ENCODE measurements at regions of chr1 and their contacts with region 1.

Region 1: GRCh38 chr1:204989266-204990058 is 53.5 kb upstream of the CNTN2 start:
- DNase-seq: peak; percentile 65 to 71 (median 69)
- ATAC-seq: peak; percentile 82
- H3K4me3 ChIP-seq: no peak overlapping the region
- H3K27ac ChIP-seq: no peak overlapping the region
- H3K4me1 ChIP-seq: peaks cover 5% of the 10 kb centered on the region
- H3K27me3 ChIP-seq: no peaks in the 10 kb centered on the region
- CTCF ChIP-seq: peak; percentile 79 to 96 (median 88)
- POLR2A ChIP-seq: no peak

Region 2: DNA sequence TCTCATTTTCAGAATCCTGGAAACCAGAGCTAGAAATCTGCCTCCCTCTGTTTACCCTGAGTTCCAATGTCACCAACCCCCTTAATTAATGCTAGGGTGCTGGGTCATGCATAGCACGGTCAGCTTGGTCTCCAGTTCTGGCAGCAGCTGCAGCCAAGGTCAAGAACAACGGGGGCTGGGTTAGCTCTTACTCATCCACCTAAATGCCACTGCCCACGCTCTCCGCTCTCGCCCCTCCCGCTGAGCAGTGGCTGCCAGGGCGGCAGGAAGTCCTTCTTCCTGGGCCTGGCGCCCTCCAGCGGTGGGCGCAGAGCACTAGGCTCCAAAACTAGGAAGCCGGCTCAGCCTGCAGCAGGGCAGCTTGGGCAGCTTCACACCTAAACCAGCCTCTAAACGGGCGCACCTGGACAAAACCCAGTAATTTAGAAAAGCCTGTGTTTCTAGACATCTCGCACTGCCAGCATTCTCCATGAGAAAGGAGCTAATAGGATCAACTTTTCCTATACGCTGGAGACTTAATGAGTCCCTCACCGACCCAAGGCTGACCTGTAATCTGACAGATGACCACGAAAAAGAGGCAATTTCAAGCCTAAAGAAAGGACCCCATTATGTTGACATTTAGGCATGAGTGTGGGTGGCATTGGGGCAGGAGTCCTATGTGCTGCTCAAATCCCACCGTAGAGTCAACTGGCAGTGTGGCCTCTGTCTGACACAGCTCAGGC is 225.6 kb before region 1 on chr1:
- intact Hi-C with region 1: no loop called
- DNase-seq: peak; percentile 85 to 94 (median 92)
- ATAC-seq: peak; percentile 97
- H3K4me3 ChIP-seq: no peak overlapping the region
- H3K27ac ChIP-seq: peak overlapping the region in 3 of 4 donors; percentile 15 to 47 (median 40)
- H3K4me1 ChIP-seq: peaks cover 12% of the 10 kb centered on the region
- H3K27me3 ChIP-seq: peaks cover 0 to 1% of the 10 kb centered on the region in 2 donors
- CTCF ChIP-seq: peak; percentile 81 to 96 (median 84)
- POLR2A ChIP-seq: no peak

Region 3: DNA sequence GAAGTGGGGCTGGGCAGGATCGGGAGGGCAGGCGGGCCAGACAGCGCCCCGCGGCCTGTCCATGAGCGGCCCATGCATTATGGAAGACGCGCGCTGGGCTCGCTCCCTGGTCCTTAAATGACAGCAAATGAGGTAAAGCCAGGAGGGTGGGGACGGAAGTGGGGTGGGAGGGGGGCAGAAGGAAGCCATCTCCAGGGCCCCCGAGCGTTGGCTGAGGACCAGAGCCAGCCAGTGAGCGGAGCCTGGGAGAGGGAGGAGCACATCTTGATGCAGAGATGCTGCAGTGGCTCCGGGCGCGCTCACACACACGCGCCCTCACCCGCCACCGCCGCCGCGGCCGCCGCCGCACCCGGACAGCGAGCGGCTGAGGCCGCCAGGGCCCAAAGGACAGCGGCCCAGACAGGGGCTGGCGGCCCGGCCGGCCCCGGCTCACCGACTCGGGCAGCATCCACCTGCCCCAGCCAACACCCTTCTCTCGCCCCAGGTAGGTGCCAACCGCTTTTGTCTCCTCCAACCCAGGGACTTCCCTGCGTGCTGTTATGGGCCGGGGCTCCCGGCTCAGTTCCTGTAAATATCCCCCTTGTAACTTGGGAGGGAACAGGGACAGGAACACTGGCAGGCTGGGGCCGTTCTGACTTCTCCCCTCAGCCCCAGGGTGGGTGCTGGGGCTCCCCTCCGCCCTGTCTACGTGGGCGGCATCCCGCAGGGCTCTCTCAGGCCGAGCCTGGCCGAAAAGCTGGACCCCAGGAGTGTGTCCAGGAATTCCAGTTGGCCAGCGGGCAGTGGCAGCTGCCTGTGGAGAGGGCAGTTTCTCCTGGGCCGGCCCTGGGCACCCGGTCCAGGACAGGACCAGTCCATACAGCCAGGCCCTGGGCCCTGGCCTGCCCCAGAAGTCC is 53.7 kb after region 1 on chr1 and contains the start of gene CNTN2:
- intact Hi-C with region 1: no loop called
- DNase-seq: no peak
- ATAC-seq: no peak
- H3K4me3 ChIP-seq: no peak within 1 kb of the TSS
- H3K27ac ChIP-seq: no peak within 1 kb of the TSS
- H3K4me1 ChIP-seq: no peaks in the 10 kb centered on the region
- H3K27me3 ChIP-seq: peaks cover 0 to 3% of the 10 kb centered on the region in 2 donors
- CTCF ChIP-seq: no peak
- POLR2A ChIP-seq: no peak
- total RNA-seq, gene CNTN2: not detected

Region 4: DNA sequence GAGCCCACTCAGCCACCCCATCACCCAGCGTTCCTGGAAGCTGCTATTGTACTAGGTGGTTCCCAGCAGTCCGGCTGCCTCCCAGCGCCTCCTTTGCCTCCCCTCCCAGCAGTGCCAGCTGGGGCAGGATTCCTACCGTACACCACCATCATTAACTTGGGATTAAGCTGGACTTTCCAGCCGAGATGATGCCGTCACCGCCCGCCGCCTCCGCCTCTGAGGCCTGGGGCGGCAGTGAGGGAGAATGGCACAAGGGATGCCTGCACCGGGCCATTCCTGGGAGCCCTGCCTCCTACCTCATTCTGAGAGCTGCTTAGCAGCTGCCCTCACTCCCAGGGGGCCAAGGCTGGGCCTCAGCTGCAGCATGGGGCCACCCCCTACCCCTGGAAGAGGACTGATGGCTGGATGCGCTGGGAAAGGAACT is 66.7 kb after region 1 on chr1:
- intact Hi-C with region 1: loop called (anchors 5 kb)
- DNase-seq: no peak
- ATAC-seq: no peak
- H3K4me3 ChIP-seq: no peak overlapping the region
- H3K27ac ChIP-seq: no peak overlapping the region
- H3K4me1 ChIP-seq: no peaks in the 10 kb centered on the region
- H3K27me3 ChIP-seq: no peaks in the 10 kb centered on the region
- CTCF ChIP-seq: no peak
- POLR2A ChIP-seq: no peak

Region 5: GRCh38 chr1:205172729-205173366 is 183.4 kb after region 1 on chr1:
- intact Hi-C with region 1: no loop called
- DNase-seq: no peak
- ATAC-seq: no peak
- H3K4me3 ChIP-seq: no peak overlapping the region
- H3K27ac ChIP-seq: no peak overlapping the region
- H3K4me1 ChIP-seq: peaks cover 8% of the 10 kb centered on the region
- H3K27me3 ChIP-seq: no peaks in the 10 kb centered on the region
- CTCF ChIP-seq: no peak
- POLR2A ChIP-seq: no peak

Measured in body of pancreas (tissue), 4 donors.